HepG2 (cell line): ENCODE measurements at regions of chr6 and their contacts with region 1.

Region 1: GRCh38 chr6:62150048-62150663 is 135.9 kb downstream of the KHDRBS2 start:
- DNase-seq: peak; percentile 72
- ATAC-seq: peak; percentile 92
- H3K4me3 ChIP-seq: no peak overlapping the region
- H3K27ac ChIP-seq: no peak overlapping the region
- H3K4me1 ChIP-seq: no peaks in the 10 kb centered on the region
- H3K27me3 ChIP-seq: no peaks in the 10 kb centered on the region
- CTCF ChIP-seq: peak; percentile 73
- EP300 ChIP-seq: no peak
- POLR2A ChIP-seq: no peak
- RAD21 ChIP-seq: no peak

Region 2: DNA sequence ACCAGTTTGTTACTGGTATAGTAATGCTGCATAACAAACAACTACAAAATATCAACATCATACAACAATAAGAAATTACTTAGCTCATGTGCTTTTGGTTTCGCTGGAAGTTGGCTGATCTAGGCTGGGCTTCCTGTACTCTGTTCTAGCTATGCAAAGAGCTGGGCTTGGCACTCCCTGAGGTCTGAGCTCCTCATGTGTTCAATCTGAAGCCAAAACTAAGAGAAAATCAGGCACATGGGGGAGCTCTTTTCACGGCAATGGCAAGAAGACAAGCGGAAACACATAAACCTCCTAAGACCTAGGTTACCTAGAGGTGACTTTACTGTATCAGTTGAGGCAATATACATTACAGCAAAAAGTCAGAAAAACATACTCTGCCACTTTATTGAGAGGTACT is 438.3 kb before region 1 on chr6:
- CTCF ChIA-PET with region 1: no interaction called
- POLR2A ChIA-PET with region 1: no interaction called
- in situ Hi-C with region 1: no loop called
- intact Hi-C with region 1: loop called (anchors 1 kb)
- DNase-seq: no peak
- ATAC-seq: no peak
- H3K4me3 ChIP-seq: no peak overlapping the region
- H3K27ac ChIP-seq: no peak overlapping the region
- H3K4me1 ChIP-seq: no peaks in the 10 kb centered on the region
- H3K27me3 ChIP-seq: no peaks in the 10 kb centered on the region
- CTCF ChIP-seq: no peak
- EP300 ChIP-seq: no peak
- POLR2A ChIP-seq: no peak
- RAD21 ChIP-seq: no peak

Region 3: GRCh38 chr6:61809004-61809595 is 341.1 kb before region 1 on chr6:
- CTCF ChIA-PET with region 1: interaction called, 3 read pairs
- POLR2A ChIA-PET with region 1: no interaction called
- in situ Hi-C with region 1: no loop called
- intact Hi-C with region 1: loop called (anchors 1 kb)
- DNase-seq: peak; percentile 45
- ATAC-seq: peak; percentile 74
- H3K4me3 ChIP-seq: no peak overlapping the region
- H3K27ac ChIP-seq: no peak overlapping the region
- H3K4me1 ChIP-seq: no peaks in the 10 kb centered on the region
- H3K27me3 ChIP-seq: no peaks in the 10 kb centered on the region
- CTCF ChIP-seq: peak; percentile 56
- EP300 ChIP-seq: no peak
- POLR2A ChIP-seq: no peak
- RAD21 ChIP-seq: no peak

Region 4: GRCh38 chr6:61886608-61887259 is 263.4 kb before region 1 on chr6:
- CTCF ChIA-PET with region 1: interaction called, 3 read pairs
- POLR2A ChIA-PET with region 1: no interaction called
- in situ Hi-C with region 1: no loop called
- intact Hi-C with region 1: loop called (anchors 1 kb)
- DNase-seq: peak; percentile 17
- ATAC-seq: peak; percentile 59
- H3K4me3 ChIP-seq: no peak overlapping the region
- H3K27ac ChIP-seq: no peak overlapping the region
- H3K4me1 ChIP-seq: no peaks in the 10 kb centered on the region
- H3K27me3 ChIP-seq: no peaks in the 10 kb centered on the region
- CTCF ChIP-seq: 0 out of 2 replicates have a peak, but pooled peaks have one; percentile 9
- EP300 ChIP-seq: no peak
- POLR2A ChIP-seq: no peak
- RAD21 ChIP-seq: no peak

Region 5: GRCh38 chr6:62229231-62229630 is 79.1 kb after region 1 on chr6:
- CTCF ChIA-PET with region 1: no interaction called
- POLR2A ChIA-PET with region 1: no interaction called
- in situ Hi-C with region 1: no loop called
- intact Hi-C with region 1: no loop called
- DNase-seq: no peak
- ATAC-seq: no peak; the same call in 2 of the 3 replicates
- H3K4me3 ChIP-seq: no peak overlapping the region
- H3K27ac ChIP-seq: no peak overlapping the region
- H3K4me1 ChIP-seq: no peaks in the 10 kb centered on the region
- H3K27me3 ChIP-seq: no peaks in the 10 kb centered on the region
- CTCF ChIP-seq: no peak
- EP300 ChIP-seq: no peak
- POLR2A ChIP-seq: no peak
- RAD21 ChIP-seq: no peak